Calu3 (cell line): ENCODE measurements at regions of chr19 and their contacts with region 1.

Region 1: DNA sequence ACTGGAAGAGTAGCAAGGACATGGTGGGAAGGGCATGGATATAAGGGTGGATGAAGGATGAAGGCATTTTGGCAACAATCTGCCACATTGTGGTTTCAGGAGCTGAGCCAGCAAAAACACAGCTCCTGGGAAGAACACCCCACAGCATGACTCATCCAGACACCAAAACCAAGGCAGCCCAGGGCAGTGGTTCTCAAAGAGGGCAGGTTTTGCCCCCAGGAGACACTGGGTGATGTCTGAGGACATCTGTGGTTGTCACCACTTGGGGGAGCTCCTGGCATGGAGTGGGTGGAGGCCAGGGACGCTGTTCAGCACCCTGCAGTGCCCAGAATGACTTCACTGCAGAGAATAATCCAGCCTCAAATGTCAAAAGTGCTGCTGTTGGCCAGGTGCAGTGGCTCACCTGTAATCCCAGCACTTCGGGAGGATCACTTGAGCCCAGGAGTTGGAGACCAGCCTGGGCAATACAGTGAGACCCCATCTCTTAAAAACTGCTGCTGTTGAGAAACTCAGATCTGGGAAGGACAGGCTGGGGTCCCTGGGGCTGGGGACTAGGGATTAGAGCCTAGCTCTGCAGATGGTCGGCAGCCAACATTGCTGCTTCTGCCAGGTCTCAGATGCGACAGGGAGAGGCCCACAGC is 16.1 kb downstream of the ZFR2 start:
- DNase-seq: peak; percentile 84
- H3K4me3 Mint-ChIP-seq: no peak overlapping the region
- H3K27ac Mint-ChIP-seq: no peak overlapping the region
- H3K4me1 Mint-ChIP-seq: peaks cover 26% of the 10 kb centered on the region
- H3K27me3 Mint-ChIP-seq: no peaks in the 10 kb centered on the region
- CTCF ChIP-seq: peak; percentile 51

Region 2: GRCh38 chr19:3968556-3969434 is 116.1 kb after region 1 on chr19:
- CTCF ChIA-PET with region 1: interaction called, 10 read pairs
- intact Hi-C with region 1: loop called (anchors 5 kb)
- DNase-seq: peak; percentile 88
- H3K4me3 Mint-ChIP-seq: peak overlapping the region; percentile 78
- H3K27ac Mint-ChIP-seq: peak overlapping the region; percentile 72
- H3K4me1 Mint-ChIP-seq: peaks cover 14% of the 10 kb centered on the region
- H3K27me3 Mint-ChIP-seq: no peaks in the 10 kb centered on the region
- CTCF ChIP-seq: no peak

Region 3: GRCh38 chr19:3984908-3985642 is 132.3 kb after region 1 on chr19 and contains the start of gene EEF2:
- CTCF ChIA-PET with region 1: interaction called, 16 read pairs
- intact Hi-C with region 1: loop called (anchors 5 kb)
- DNase-seq: peak; percentile 83
- H3K4me3 Mint-ChIP-seq: peak within 1 kb of the TSS; percentile 65
- H3K27ac Mint-ChIP-seq: peak within 1 kb of the TSS; percentile 17
- H3K4me1 Mint-ChIP-seq: peaks cover 7% of the 10 kb centered on the region
- H3K27me3 Mint-ChIP-seq: no peaks in the 10 kb centered on the region
- CTCF ChIP-seq: no peak
- total RNA-seq, gene EEF2: 1,011 and 1,166 TPM in 2 replicates

Region 4: GRCh38 chr19:4208385-4209094 is 355.8 kb after region 1 on chr19:
- CTCF ChIA-PET with region 1: no interaction called
- intact Hi-C with region 1: loop called (anchors 10 kb)
- DNase-seq: peak; percentile 53
- H3K4me3 Mint-ChIP-seq: no peak overlapping the region
- H3K27ac Mint-ChIP-seq: peak overlapping the region; percentile 56
- H3K4me1 Mint-ChIP-seq: no peaks in the 10 kb centered on the region
- H3K27me3 Mint-ChIP-seq: peaks cover 18% of the 10 kb centered on the region
- CTCF ChIP-seq: peak; percentile 28